IMR-90 (cell line): ENCODE measurements at regions of chr5 and their contacts with region 1.

Region 1: GRCh38 chr5:65125591-65126541 is 355.9 kb downstream of the ADAMTS6 start:
- DNase-seq: peak; percentile 82
- ATAC-seq: peak; percentile 45
- H3K4me3 ChIP-seq: no peak overlapping the region
- H3K27ac ChIP-seq: peak overlapping the region; percentile 90
- H3K4me1 ChIP-seq: peaks cover 19% of the 10 kb centered on the region
- H3K27me3 ChIP-seq: no peaks in the 10 kb centered on the region
- CTCF ChIP-seq: no peak
- POLR2A ChIP-seq: no peak; the same call in 1 of the 2 replicates
- RAD21 ChIP-seq: no peak

Region 2: DNA sequence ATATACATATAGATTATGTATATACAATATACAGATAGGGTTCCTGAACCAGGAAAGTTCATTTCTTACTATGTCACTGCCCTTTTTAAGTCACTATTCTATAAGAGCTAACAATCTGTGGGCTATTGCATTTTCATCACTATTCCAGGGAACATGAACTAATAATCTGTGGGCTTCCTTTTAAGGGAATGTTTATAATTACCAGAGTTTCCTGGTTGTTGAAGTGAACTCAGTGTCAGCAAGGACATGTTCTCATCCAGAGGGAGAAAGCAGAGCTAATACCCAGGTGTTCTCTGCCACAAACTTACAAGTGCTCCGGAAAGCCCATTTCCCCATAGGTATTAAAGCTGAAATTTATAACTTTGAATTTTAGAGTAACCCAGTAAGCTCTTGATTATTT is 287.5 kb before region 1 on chr5:
- CTCF ChIA-PET with region 1: no interaction called
- POLR2A ChIA-PET with region 1: no interaction called
- dilution Hi-C with region 1: no loop called
- in situ Hi-C with region 1: no loop called
- intact Hi-C with region 1: no loop called
- DNase-seq: peak; percentile 68
- ATAC-seq: peak; percentile 64
- H3K4me3 ChIP-seq: no peak overlapping the region
- H3K27ac ChIP-seq: no peak overlapping the region
- H3K4me1 ChIP-seq: no peaks in the 10 kb centered on the region
- H3K27me3 ChIP-seq: no peaks in the 10 kb centered on the region
- CTCF ChIP-seq: no peak
- POLR2A ChIP-seq: no peak
- RAD21 ChIP-seq: no peak

Region 3: GRCh38 chr5:64958757-64959391 is 167.0 kb before region 1 on chr5:
- CTCF ChIA-PET with region 1: no interaction called
- POLR2A ChIA-PET with region 1: interaction called, 3 read pairs
- dilution Hi-C with region 1: no loop called
- in situ Hi-C with region 1: no loop called
- intact Hi-C with region 1: loop called (anchors 2 kb)
- DNase-seq: peak; percentile 72
- ATAC-seq: no peak; the same call in 1 of the 2 replicates
- H3K4me3 ChIP-seq: no peak overlapping the region
- H3K27ac ChIP-seq: peak overlapping the region; percentile 56; the same call in 1 of the 2 replicates
- H3K4me1 ChIP-seq: peaks cover 3% of the 10 kb centered on the region; the same call in 1 of the 2 replicates
- H3K27me3 ChIP-seq: no peaks in the 10 kb centered on the region
- CTCF ChIP-seq: peak; percentile 68
- POLR2A ChIP-seq: no peak
- RAD21 ChIP-seq: peak; percentile 76

Region 4: GRCh38 chr5:64971513-64971912 is 154.4 kb before region 1 on chr5:
- CTCF ChIA-PET with region 1: no interaction called
- POLR2A ChIA-PET with region 1: no interaction called
- dilution Hi-C with region 1: no loop called
- in situ Hi-C with region 1: no loop called
- intact Hi-C with region 1: no loop called
- DNase-seq: peak; percentile 48
- ATAC-seq: no peak
- H3K4me3 ChIP-seq: no peak overlapping the region
- H3K27ac ChIP-seq: no peak overlapping the region
- H3K4me1 ChIP-seq: no peaks in the 10 kb centered on the region; the same call in 1 of the 2 replicates
- H3K27me3 ChIP-seq: no peaks in the 10 kb centered on the region
- CTCF ChIP-seq: peak; percentile 38
- POLR2A ChIP-seq: no peak
- RAD21 ChIP-seq: peak; percentile 38; the same call in 1 of the 2 replicates

Region 5: GRCh38 chr5:65035211-65036206 is 90.4 kb before region 1 on chr5:
- CTCF ChIA-PET with region 1: no interaction called
- POLR2A ChIA-PET with region 1: no interaction called
- dilution Hi-C with region 1: no loop called
- in situ Hi-C with region 1: no loop called
- intact Hi-C with region 1: no loop called
- DNase-seq: peak; percentile 97
- ATAC-seq: peak; percentile 91
- H3K4me3 ChIP-seq: peak overlapping the region; percentile 64
- H3K27ac ChIP-seq: peak overlapping the region; percentile 96
- H3K4me1 ChIP-seq: peaks cover 8% of the 10 kb centered on the region
- H3K27me3 ChIP-seq: no peaks in the 10 kb centered on the region
- CTCF ChIP-seq: no peak
- POLR2A ChIP-seq: peak; percentile 88
- RAD21 ChIP-seq: no peak; the same call in 1 of the 2 replicates

Region 6: GRCh38 chr5:65102828-65103711 is 22.8 kb before region 1 on chr5:
- CTCF ChIA-PET with region 1: interaction called, 3 read pairs
- POLR2A ChIA-PET with region 1: no interaction called
- dilution Hi-C with region 1: no loop called
- in situ Hi-C with region 1: no loop called
- intact Hi-C with region 1: loop called (anchors 1 kb)
- DNase-seq: peak; percentile 15
- ATAC-seq: peak; percentile 18
- H3K4me3 ChIP-seq: peak overlapping the region; percentile 21; the same call in 1 of the 2 replicates
- H3K27ac ChIP-seq: peak overlapping the region; percentile 91
- H3K4me1 ChIP-seq: peaks cover 18% of the 10 kb centered on the region
- H3K27me3 ChIP-seq: no peaks in the 10 kb centered on the region
- CTCF ChIP-seq: no peak
- POLR2A ChIP-seq: no peak
- RAD21 ChIP-seq: no peak

Region 7: DNA sequence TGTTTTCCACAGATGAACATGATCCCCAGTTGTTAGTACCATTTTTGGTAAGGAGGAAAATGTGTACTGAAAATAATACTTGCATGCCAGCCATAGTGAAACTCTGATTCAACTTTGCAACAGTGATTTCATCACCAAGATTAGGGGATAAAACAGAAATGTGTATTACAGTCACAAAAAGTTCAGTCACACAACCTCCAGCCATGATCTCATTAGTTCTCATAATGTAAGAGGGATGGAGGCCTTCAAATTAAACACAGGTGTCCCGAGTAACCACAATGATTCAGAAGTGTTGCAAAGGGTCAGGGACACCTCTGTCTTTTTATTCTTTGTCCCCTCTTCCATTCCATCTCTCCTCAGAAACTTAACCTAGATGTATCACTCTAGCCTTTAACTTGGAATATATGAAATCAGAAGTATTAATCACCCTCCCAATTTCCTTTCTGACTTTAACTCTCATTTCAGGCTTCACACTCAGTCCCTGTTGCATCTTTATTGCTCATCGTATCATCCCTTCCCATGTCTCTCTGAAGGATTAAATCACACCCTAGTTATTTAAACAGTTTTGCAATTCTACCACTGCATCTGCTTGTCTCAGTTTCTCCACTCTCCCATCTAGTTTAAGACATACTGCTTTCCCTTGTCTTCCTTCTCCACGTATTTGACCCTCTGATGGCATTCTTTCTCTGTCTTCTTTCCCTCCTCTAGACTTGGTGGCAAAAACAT is 64.6 kb after region 1 on chr5:
- CTCF ChIA-PET with region 1: interaction called, 3 read pairs
- POLR2A ChIA-PET with region 1: no interaction called
- dilution Hi-C with region 1: no loop called
- in situ Hi-C with region 1: no loop called
- intact Hi-C with region 1: loop called (anchors 1 kb)
- DNase-seq: peak; percentile 99
- ATAC-seq: peak; percentile 79
- H3K4me3 ChIP-seq: no peak overlapping the region
- H3K27ac ChIP-seq: peak overlapping the region; percentile 28
- H3K4me1 ChIP-seq: peaks cover 8% of the 10 kb centered on the region
- H3K27me3 ChIP-seq: no peaks in the 10 kb centered on the region
- CTCF ChIP-seq: no peak
- POLR2A ChIP-seq: peak; percentile 59; the same call in 1 of the 2 replicates
- RAD21 ChIP-seq: no peak

Region 8: DNA sequence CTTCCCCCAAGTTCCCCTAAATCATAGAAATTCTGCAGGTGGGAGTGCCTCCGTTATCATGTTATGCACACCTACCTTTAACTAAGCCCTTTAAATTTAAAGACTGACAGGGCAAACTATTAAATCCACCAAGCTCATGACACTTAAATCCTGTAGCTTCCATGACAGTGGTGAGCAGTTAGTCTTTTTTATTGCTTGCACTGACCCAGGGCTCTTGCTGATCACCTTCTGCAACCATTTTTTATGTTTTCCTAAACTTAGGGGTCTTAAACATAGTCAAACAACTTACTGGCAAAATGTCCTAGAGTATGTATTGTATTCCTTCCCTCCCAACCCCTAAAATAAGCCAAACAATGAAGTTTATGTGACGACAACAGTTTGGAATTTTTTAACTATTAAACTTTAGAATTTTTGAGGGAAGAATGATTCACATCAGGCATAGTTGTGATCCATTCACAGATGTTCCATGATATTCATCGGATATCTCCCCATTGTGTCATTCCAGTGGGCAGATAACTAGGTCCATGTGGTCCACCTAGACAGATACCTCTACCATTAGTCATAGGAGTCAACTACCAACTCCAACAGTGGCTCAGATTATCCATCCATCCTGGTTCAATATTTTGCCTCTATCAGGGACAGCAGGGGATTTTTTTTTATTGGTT is 72.7 kb after region 1 on chr5:
- CTCF ChIA-PET with region 1: interaction called, 3 read pairs
- POLR2A ChIA-PET with region 1: no interaction called
- dilution Hi-C with region 1: no loop called
- in situ Hi-C with region 1: no loop called
- intact Hi-C with region 1: loop called (anchors 2 kb)
- DNase-seq: peak; percentile 99
- ATAC-seq: peak; percentile 85
- H3K4me3 ChIP-seq: no peak overlapping the region
- H3K27ac ChIP-seq: peak overlapping the region; percentile 81
- H3K4me1 ChIP-seq: peaks cover 11% of the 10 kb centered on the region
- H3K27me3 ChIP-seq: no peaks in the 10 kb centered on the region
- CTCF ChIP-seq: no peak
- POLR2A ChIP-seq: no peak
- RAD21 ChIP-seq: no peak

Region 9: DNA sequence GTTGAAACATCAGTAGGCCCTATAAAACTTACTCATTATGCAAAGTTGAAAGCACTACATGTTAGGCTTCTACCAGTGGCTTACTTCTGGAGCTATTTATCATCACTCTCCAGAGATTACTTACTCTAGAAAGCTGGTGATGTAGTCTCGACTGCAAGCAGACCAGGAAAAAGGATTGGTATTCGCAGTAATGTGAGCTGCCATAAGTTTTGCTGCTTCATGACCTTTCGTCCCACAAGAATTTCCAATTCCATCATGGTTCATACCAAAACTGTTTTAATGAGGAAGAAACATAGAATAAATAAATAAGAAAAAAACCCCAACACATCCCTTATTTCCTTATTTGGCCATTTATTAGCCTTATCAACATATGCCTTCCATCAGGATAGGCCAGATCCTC is 174.0 kb after region 1 on chr5:
- CTCF ChIA-PET with region 1: interaction called, 4 read pairs
- POLR2A ChIA-PET with region 1: no interaction called
- dilution Hi-C with region 1: no loop called
- in situ Hi-C with region 1: no loop called
- intact Hi-C with region 1: loop called (anchors 10 kb)
- DNase-seq: peak; percentile 97
- ATAC-seq: peak; percentile 95
- H3K4me3 ChIP-seq: no peak overlapping the region
- H3K27ac ChIP-seq: no peak overlapping the region
- H3K4me1 ChIP-seq: peaks cover 1% of the 10 kb centered on the region; the same call in 1 of the 2 replicates
- H3K27me3 ChIP-seq: no peaks in the 10 kb centered on the region
- CTCF ChIP-seq: no peak
- POLR2A ChIP-seq: no peak
- RAD21 ChIP-seq: no peak